Activated B cell treated with CpG ODN at 0.5 μM for 24 hours (primary cell): ENCODE measurements at regions of chr20 and their contacts with region 1.

Region 1: GRCh38 chr20:44521484-44522481 is at the start of gene SERINC3:
- DNase-seq: peak; percentile 97
- ATAC-seq: peak; percentile 98
- H3K4me3 Mint-ChIP-seq: peak within 1 kb of the TSS; percentile 89
- H3K27ac Mint-ChIP-seq: peak within 1 kb of the TSS; percentile 83
- H3K4me1 Mint-ChIP-seq: peaks cover 44% of the 10 kb centered on the region
- H3K27me3 Mint-ChIP-seq: no peaks in the 10 kb centered on the region
- CTCF ChIP-seq: no peak
- total RNA-seq, gene SERINC3: 38.1 and 41.4 TPM in 2 replicates

Region 2: GRCh38 chr20:44310664-44311639 is 210.8 kb before region 1 on chr20 and contains the start of gene FITM2:
- CTCF ChIA-PET with region 1: no interaction called
- POLR2A ChIA-PET with region 1: no interaction called
- intact Hi-C with region 1: loop called (anchors 1 kb)
- DNase-seq: peak; percentile 99
- ATAC-seq: peak; percentile 97
- H3K4me3 Mint-ChIP-seq: peak within 1 kb of the TSS; percentile 91
- H3K27ac Mint-ChIP-seq: peak within 1 kb of the TSS; percentile 85
- H3K4me1 Mint-ChIP-seq: peaks cover 19% of the 10 kb centered on the region
- H3K27me3 Mint-ChIP-seq: peaks cover 3% of the 10 kb centered on the region
- CTCF ChIP-seq: no peak
- total RNA-seq, gene FITM2: 2.4 and 3.3 TPM in 2 replicates

Region 3: DNA sequence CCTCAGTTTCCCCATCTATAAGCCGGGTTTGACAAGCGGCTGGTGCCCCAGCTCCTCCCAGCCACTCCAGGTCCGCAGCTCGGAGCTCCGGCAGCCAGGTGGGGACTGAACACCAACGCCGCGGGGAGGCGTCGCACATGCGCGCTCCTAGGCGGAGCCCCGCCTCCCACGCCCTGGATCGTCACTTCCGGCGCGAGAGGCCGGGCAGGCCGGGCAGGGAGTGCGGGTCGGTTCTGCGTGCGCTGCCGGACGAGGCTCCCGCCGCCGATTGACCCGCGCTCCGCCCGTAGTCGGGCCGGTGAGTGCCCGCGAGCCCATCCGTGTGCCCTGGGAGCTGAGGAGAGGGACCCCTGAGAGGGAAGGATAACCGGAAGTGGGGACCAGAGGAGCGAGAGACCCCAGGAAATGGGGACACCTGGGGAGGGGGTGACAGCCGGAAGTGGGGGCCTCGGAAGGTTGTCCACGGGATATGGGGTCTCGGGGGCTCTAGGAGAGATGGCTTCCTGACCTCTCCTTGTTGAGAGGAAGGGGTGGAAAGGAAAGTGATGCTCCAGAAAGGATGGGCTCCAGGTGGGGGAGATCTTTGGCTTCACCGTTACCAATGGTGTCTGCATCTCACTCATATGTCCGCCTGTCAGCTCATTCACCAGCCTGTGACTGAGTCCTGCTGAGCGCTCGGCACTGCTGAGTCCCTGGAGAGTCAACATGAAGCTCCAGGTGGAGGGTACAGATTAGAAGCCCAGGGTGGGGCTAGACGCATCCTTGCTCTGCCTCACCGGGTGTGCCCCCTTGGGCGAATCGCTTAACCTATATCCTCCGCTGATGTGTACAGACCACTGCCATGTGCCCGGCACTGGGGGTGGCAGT is 45.9 kb before region 1 on chr20 and contains the start of gene TTPAL:
- CTCF ChIA-PET with region 1: interaction called, 3 read pairs
- POLR2A ChIA-PET with region 1: interaction called, 12 read pairs
- intact Hi-C with region 1: loop called (anchors 1 kb)
- DNase-seq: peak; percentile 93
- ATAC-seq: peak; percentile 91
- H3K4me3 Mint-ChIP-seq: peak within 1 kb of the TSS; percentile 96
- H3K27ac Mint-ChIP-seq: peak within 1 kb of the TSS; percentile 94
- H3K4me1 Mint-ChIP-seq: peaks cover 40% of the 10 kb centered on the region
- H3K27me3 Mint-ChIP-seq: no peaks in the 10 kb centered on the region
- CTCF ChIP-seq: no peak
- total RNA-seq, gene TTPAL: 27.5 and 27.7 TPM in 2 replicates

Region 4: GRCh38 chr20:44532259-44532980 is 10.6 kb after region 1 on chr20:
- CTCF ChIA-PET with region 1: no interaction called
- POLR2A ChIA-PET with region 1: interaction called, 11 read pairs
- intact Hi-C with region 1: loop called (anchors 1 kb)
- DNase-seq: no peak
- ATAC-seq: no peak
- H3K4me3 Mint-ChIP-seq: no peak overlapping the region
- H3K27ac Mint-ChIP-seq: no peak overlapping the region
- H3K4me1 Mint-ChIP-seq: peaks cover 9% of the 10 kb centered on the region
- H3K27me3 Mint-ChIP-seq: no peaks in the 10 kb centered on the region
- CTCF ChIP-seq: no peak

Region 5: DNA sequence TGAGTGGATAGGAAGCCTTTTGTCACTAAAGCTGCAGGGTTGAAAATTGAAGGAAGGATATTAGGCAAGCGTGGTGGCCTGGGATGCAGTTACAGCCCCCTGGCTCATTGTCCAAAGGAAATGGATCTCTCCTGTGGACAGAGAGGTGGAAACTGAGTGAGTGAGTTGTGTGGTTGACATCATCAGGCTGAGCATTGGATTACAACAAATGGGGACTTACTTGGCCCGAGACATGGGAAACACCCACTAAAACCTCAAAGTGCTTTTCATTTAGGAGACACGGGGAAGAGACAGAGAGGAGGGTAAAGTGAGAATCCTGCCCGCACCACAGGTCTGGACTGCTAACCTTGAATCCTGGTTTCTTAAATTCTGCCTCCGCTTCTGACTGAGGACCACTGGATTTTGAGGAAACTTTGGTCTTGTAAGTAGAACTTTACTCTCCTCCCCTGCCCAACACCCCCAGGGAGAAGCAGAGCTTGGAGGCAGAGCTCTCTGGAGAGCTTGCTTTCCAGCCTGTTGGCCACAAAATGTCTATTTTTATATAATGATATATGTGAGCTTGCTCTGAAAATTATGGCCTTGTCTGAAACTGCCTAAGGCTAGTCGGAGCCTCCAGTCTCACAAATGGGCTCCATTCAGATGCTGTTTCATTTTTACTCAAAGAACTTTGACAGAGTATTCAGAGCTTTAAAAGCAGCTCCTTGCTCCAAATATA is 60.7 kb after region 1 on chr20 and contains the start of gene PKIG:
- CTCF ChIA-PET with region 1: no interaction called
- POLR2A ChIA-PET with region 1: interaction called, 13 read pairs
- intact Hi-C with region 1: loop called (anchors 1 kb)
- DNase-seq: no peak
- ATAC-seq: no peak
- H3K4me3 Mint-ChIP-seq: peak within 1 kb of the TSS; percentile 94
- H3K27ac Mint-ChIP-seq: peak within 1 kb of the TSS; percentile 96
- H3K4me1 Mint-ChIP-seq: peaks cover 79% of the 10 kb centered on the region
- H3K27me3 Mint-ChIP-seq: no peaks in the 10 kb centered on the region
- CTCF ChIP-seq: no peak
- total RNA-seq, gene PKIG: 181 and 191 TPM in 2 replicates

Region 6: GRCh38 chr20:44733341-44734069 is 211.7 kb after region 1 on chr20:
- CTCF ChIA-PET with region 1: no interaction called
- POLR2A ChIA-PET with region 1: no interaction called
- intact Hi-C with region 1: loop called (anchors 5 kb)
- DNase-seq: peak; percentile 27
- ATAC-seq: peak; percentile 74
- H3K4me3 Mint-ChIP-seq: no peak overlapping the region
- H3K27ac Mint-ChIP-seq: no peak overlapping the region
- H3K4me1 Mint-ChIP-seq: peaks cover 8% of the 10 kb centered on the region
- H3K27me3 Mint-ChIP-seq: no peaks in the 10 kb centered on the region
- CTCF ChIP-seq: no peak

Region 7: GRCh38 chr20:44966030-44966961 is 444.5 kb after region 1 on chr20 and contains the start of gene STK4:
- CTCF ChIA-PET with region 1: no interaction called
- POLR2A ChIA-PET with region 1: no interaction called
- intact Hi-C with region 1: no loop called
- DNase-seq: peak; percentile 98
- ATAC-seq: peak; percentile 78
- H3K4me3 Mint-ChIP-seq: peak within 1 kb of the TSS; percentile 99
- H3K27ac Mint-ChIP-seq: peak within 1 kb of the TSS; percentile 97
- H3K4me1 Mint-ChIP-seq: peaks cover 67% of the 10 kb centered on the region
- H3K27me3 Mint-ChIP-seq: no peaks in the 10 kb centered on the region
- CTCF ChIP-seq: no peak
- total RNA-seq, gene STK4: 219 and 245 TPM in 2 replicates